MCF 10A (cell line): ENCODE measurements at regions of chr15 and their contacts with region 1.

Region 1: DNA sequence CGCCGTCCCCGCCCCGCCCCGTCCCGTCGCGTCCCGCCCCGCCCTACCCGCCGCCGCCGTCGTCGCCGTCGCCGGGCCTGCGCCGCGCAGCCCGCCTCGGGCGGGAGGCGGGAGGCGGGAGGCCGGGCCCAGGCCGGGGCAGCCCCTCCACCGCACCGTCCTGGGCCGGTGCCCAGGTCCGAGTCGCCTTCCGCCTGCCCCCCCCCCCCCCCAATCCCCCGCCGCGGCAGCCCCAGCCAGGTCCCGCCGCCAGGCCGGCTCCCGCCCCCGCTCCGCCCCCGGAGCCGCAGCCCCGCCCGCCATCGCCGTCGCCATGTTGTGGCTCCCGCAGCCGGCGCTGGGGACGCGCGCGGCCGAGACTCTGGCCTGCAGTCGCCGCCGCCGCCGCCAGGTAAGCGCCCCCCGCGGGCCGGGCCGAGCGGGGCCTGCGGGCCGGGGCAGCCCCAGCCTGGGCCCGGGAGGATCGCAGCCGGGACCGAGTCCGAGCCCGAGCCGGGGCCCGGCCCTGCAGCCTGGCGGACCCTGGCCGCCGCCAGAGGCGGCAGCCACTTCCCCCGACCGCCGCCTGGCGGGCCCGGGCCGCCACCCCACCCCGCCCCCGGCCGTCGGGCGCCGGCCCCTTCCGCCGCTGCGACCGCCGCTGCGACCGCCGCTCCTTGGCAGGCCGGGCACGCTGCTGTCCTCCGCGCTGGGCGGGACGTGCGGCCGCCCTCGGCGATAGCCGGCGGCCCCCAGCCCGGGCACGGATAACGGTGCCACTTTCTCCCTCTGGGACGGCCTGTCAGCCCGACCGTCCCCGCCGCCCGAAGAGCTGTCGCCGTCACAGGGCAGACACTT is at the start of gene ZNF592:
- DNase-seq: peak; percentile 66
- H3K4me3 Mint-ChIP-seq: peak within 1 kb of the TSS; percentile 90
- H3K27ac Mint-ChIP-seq: peak within 1 kb of the TSS; percentile 93
- H3K4me1 Mint-ChIP-seq: peaks cover 41% of the 10 kb centered on the region
- H3K27me3 Mint-ChIP-seq: no peaks in the 10 kb centered on the region
- CTCF ChIP-seq: peak; percentile 19
- total RNA-seq, gene ZNF592: 27.0 and 27.5 TPM in 2 replicates

Region 2: DNA sequence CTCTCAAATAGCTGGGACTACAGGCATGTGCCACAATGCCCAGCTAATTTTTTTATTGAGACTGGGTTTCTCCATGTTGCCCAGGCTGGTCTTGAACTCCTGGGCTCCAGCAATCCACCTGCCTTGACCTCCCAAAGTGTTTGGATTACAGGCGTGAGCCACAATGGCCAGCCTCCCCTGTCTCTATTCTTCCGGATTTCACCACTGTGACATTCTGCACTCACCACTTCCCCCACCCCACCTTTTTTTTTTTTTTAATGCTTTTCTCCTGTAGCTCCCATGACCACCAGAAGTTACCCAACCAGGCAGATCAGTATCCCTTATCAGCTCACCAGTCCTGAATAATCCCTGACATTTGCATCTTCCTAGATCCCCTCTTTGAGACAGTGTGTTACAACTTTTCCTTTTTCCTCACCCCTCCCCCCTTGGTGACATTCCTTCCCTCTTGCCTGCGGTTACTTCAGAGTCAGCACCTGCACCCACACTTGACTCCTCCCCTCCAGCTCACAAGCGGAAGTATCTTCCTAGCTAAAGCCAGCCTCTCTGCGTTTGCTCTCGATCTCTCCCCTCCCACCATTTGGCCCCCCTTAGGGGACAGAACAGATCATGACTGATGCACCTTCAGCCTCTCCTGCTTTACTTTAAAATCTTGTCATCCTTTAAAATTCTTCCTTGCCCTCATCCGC is 13.6 kb before region 1 on chr15:
- CTCF ChIA-PET with region 1: interaction called, 3 read pairs
- POLR2A ChIA-PET with region 1: interaction called, 31 read pairs
- intact Hi-C with region 1: loop called (anchors 1 kb)
- DNase-seq: peak; percentile 65
- H3K4me3 Mint-ChIP-seq: peak overlapping the region; percentile 70
- H3K27ac Mint-ChIP-seq: peak overlapping the region; percentile 55
- H3K4me1 Mint-ChIP-seq: peaks cover 20% of the 10 kb centered on the region
- H3K27me3 Mint-ChIP-seq: no peaks in the 10 kb centered on the region
- CTCF ChIP-seq: no peak

Region 3: DNA sequence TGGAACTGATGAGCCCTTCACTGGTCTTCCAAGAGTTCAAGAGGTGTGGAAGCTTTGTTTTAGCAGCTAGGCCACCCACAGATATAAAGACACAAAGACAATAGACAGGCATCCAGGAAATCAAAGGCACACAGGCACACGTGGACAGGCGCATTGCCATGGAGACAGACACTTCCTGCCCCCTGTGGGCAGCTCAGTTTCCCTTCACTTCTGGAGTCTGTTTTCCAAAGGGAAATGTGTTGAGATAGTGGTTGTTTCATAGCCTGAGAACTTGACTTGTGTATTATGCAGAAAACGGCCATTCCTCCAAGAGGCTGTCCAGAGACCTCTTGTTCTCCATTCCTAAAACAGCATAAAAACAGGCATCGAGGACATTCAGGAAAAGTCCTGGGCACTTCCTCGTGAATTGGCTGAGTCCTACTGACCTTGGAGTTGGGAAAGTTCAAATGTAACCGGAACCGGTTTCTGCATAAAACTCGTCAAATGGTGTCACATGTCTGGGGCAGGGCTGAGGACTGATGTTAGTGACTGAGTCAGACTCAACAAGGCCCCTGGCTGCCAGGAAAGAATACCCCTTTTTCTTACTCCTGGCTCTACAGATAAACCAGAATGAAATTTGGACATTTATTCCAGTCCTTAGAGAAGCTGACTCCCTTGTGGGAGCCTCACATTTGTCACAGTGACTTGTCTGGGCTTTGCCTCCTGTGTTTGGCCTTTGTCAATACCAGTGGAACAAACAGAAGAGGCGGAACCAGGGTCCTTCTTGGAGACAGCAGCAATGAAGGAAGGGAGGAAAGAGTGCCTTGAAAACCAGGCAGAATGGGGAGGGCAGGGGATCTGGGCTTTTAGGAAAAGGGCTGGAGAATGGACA is 70.0 kb after region 1 on chr15:
- CTCF ChIA-PET with region 1: no interaction called
- POLR2A ChIA-PET with region 1: no interaction called
- intact Hi-C with region 1: no loop called
- DNase-seq: no peak
- H3K4me3 Mint-ChIP-seq: no peak overlapping the region
- H3K27ac Mint-ChIP-seq: no peak overlapping the region
- H3K4me1 Mint-ChIP-seq: no peaks in the 10 kb centered on the region
- H3K27me3 Mint-ChIP-seq: peaks cover 15% of the 10 kb centered on the region
- CTCF ChIP-seq: no peak

Region 4: GRCh38 chr15:84922530-84922929 is 174.0 kb after region 1 on chr15:
- CTCF ChIA-PET with region 1: no interaction called
- POLR2A ChIA-PET with region 1: no interaction called
- intact Hi-C with region 1: no loop called
- DNase-seq: no peak
- H3K4me3 Mint-ChIP-seq: no peak overlapping the region
- H3K27ac Mint-ChIP-seq: no peak overlapping the region
- H3K4me1 Mint-ChIP-seq: no peaks in the 10 kb centered on the region
- H3K27me3 Mint-ChIP-seq: no peaks in the 10 kb centered on the region
- CTCF ChIP-seq: no peak

Region 5: GRCh38 chr15:85073556-85074194 is 325.2 kb after region 1 on chr15:
- CTCF ChIA-PET with region 1: no interaction called
- POLR2A ChIA-PET with region 1: no interaction called
- intact Hi-C with region 1: no loop called
- DNase-seq: peak; percentile 32
- H3K4me3 Mint-ChIP-seq: no peak overlapping the region
- H3K27ac Mint-ChIP-seq: peak overlapping the region; percentile 25
- H3K4me1 Mint-ChIP-seq: peaks cover 7% of the 10 kb centered on the region
- H3K27me3 Mint-ChIP-seq: no peaks in the 10 kb centered on the region
- CTCF ChIP-seq: no peak

Region 6: GRCh38 chr15:85094685-85095084 is 346.2 kb after region 1 on chr15:
- CTCF ChIA-PET with region 1: no interaction called
- POLR2A ChIA-PET with region 1: no interaction called
- intact Hi-C with region 1: no loop called
- DNase-seq: peak; percentile 11
- H3K4me3 Mint-ChIP-seq: no peak overlapping the region
- H3K27ac Mint-ChIP-seq: no peak overlapping the region
- H3K4me1 Mint-ChIP-seq: peaks cover 17% of the 10 kb centered on the region
- H3K27me3 Mint-ChIP-seq: no peaks in the 10 kb centered on the region
- CTCF ChIP-seq: no peak